AG04449 (cell line): ENCODE measurements at regions of chr12 and their contacts with region 1.

Region 1: DNA sequence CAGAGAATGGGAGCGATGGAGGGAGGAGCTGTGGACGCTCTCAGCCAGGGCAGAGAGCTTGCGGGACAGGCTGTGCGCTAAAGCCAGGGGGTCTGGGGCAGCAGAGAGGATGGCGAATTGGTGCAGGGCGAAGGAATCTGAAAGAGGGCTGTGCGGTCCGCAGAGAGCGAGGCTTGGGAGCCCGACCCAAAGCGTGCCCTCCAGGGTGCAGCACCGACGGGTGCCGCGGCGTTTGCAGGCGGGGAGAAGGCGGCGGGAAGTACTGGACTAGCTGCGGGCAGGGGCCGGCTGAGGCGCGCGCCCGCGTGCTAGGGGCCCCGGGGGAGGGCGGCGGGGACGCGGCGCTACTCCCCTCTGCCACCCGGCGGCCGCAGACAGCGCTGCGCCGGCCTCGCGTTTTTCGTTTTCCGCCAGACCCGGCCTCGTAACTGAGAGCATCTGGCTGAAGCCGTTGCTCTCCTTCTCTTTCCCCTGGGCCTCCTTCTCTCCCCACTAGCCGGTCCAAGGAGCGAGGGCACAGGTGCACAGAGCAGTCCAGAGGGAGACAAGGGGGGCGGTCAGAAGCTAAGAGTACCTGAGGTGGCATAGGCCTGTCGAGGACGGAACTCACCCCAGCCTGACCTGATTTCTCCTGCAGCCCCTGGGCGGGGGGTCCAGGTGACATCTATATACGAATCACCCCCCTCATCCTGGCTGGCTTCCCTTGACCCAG is 24.9 kb downstream of the SLC6A12 start:
- DNase-seq: no peak
- H3K4me3 ChIP-seq: peak overlapping the region; percentile 52
- CTCF ChIP-seq: peak; percentile 74

Region 2: DNA sequence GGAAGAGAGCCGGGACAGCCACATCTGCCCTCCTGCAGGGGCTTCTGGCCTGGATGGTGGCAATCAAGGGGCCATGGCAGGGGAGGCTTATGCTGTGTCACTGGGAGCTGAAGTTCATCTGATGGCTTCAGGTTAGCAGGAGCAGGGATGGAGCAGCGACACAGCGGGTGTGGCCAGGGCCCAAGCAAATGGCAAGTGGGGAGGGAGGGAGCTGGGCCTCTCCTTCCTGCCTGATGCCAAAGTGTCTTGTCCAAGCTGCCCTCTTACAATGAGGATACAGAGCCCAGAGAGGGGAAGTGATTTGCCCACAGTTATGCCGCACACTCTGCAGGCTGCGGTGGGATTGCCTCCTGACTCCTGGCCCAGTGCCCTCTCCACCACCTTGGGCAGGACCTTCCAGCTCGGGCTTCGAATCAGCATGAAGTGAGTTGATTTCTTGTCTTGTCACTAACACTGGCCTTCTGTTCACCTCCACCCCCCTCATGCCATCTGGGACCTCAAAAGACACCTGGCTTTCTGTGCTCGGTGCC is 71.2 kb before region 1 on chr12:
- CTCF ChIA-PET with region 1: no interaction called
- POLR2A ChIA-PET with region 1: no interaction called
- DNase-seq: no peak
- H3K4me3 ChIP-seq: no peak overlapping the region
- CTCF ChIP-seq: no peak

Region 3: DNA sequence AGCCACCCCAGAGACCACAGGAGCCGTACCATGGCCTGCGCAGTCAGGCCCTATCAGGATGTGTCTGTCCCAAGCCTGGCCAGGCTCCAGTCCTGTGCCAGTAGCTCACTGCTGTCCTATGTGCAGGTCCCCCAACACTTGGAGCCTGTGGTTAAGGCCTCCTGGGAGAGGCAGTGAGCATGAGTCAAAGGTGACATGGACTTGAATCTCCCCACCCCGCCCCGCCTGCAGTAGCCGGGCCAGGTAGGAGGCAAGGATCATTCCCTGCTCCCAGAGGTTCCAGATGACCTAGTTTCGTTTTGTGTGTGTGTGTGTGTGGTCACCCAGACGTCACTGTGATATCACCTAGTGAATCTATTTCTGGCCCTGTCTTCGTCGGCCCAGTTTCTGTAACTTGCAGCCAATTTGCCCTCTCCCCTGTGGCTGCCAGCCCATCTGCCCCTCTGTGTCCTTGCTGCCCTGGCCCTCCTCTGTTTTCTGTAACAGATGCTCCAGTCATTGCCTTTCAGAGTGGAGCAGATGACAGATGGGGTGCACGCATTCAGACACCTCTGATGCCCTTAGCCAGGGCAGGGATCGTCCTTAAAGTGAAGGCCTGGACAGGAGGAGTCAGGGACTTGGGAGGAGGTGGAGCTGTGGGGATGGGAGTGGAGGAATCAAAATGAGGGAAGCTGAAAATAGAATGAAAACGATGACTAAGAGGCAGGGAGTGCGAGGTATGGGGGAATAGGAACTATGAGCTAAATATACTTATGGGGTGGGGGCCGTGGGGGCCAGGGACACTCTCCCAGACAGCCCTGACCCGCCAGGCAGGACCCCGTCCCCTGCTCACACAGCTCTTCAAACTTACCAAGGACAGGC is 12.5 kb before region 1 on chr12:
- CTCF ChIA-PET with region 1: interaction called, 44 read pairs
- POLR2A ChIA-PET with region 1: no interaction called
- DNase-seq: no peak
- H3K4me3 ChIP-seq: no peak overlapping the region
- CTCF ChIP-seq: no peak

Region 4: GRCh38 chr12:202081-202731 is 13.1 kb after region 1 on chr12:
- CTCF ChIA-PET with region 1: interaction called, 32 read pairs
- POLR2A ChIA-PET with region 1: no interaction called
- DNase-seq: no peak
- H3K4me3 ChIP-seq: no peak overlapping the region
- CTCF ChIP-seq: no peak

Region 5: GRCh38 chr12:212715-213526 is 23.9 kb after region 1 on chr12:
- CTCF ChIA-PET with region 1: interaction called, 14 read pairs
- POLR2A ChIA-PET with region 1: no interaction called
- DNase-seq: no peak
- H3K4me3 ChIP-seq: no peak overlapping the region
- CTCF ChIP-seq: no peak

Region 6: DNA sequence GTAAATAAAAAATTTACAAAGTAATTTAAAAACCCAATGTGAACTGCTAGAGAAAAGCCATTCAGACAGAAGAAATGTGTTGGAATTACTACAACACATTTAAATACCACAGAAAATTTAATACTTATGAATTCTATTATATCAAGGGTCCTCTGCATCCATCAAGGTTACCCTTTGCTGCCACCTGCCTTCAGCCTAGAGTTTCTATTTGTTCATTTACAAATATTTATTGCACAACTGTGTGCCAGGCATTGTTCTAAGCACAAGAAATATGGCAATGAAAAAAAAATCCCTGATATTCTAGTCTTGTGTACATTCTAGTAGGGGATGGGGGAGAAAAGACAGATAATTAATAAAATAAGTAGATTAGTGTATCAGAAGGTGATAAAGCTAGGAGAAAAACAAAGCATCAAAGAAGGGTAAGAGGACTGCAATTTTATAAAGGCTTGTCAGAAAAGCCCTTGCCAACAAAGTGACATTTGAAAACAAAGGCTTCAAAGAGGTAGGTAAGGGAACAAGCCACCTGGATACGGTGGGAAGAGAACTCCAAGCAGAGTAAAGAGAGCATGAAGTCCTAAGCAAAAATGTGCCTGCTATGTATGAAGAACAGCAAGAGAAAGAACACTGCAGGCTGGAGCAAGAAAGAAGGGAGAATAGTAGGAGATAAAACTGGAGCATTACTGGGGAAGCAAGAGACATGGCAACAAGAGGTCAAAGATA is 132.7 kb after region 1 on chr12:
- CTCF ChIA-PET with region 1: no interaction called
- POLR2A ChIA-PET with region 1: no interaction called
- DNase-seq: no peak
- H3K4me3 ChIP-seq: no peak overlapping the region
- CTCF ChIP-seq: no peak